Psoas muscle (tissue), 8 donors: ENCODE measurements at regions of chr17 and their contacts with region 1.

Region 1: GRCh38 chr17:66567234-66568170 is 265.1 kb downstream of the PRKCA start:
- DNase-seq: peak; percentile 72 to 84
- ATAC-seq: peak in 3 of 4 donors; percentile 64 to 85 (median 83)
- H3K4me3 ChIP-seq: no peak overlapping the region
- H3K27ac ChIP-seq: no peak overlapping the region
- H3K4me1 ChIP-seq: no peaks in the 10 kb centered on the region
- H3K27me3 ChIP-seq: no peaks in the 10 kb centered on the region
- CTCF ChIP-seq: peak; percentile 73

Region 2: GRCh38 chr17:66281671-66282369 is 285.7 kb before region 1 on chr17:
- intact Hi-C with region 1: loop called in 1 of 2 experiments (anchors 10 kb)
- DNase-seq: no peak
- ATAC-seq: no peak
- H3K4me3 ChIP-seq: no peak overlapping the region
- H3K27ac ChIP-seq: no peak overlapping the region
- H3K4me1 ChIP-seq: no peaks in the 10 kb centered on the region
- H3K27me3 ChIP-seq: peaks cover 0 to 2% (median 0%) of the 10 kb centered on the region in 3 donors
- CTCF ChIP-seq: no peak

Region 3: DNA sequence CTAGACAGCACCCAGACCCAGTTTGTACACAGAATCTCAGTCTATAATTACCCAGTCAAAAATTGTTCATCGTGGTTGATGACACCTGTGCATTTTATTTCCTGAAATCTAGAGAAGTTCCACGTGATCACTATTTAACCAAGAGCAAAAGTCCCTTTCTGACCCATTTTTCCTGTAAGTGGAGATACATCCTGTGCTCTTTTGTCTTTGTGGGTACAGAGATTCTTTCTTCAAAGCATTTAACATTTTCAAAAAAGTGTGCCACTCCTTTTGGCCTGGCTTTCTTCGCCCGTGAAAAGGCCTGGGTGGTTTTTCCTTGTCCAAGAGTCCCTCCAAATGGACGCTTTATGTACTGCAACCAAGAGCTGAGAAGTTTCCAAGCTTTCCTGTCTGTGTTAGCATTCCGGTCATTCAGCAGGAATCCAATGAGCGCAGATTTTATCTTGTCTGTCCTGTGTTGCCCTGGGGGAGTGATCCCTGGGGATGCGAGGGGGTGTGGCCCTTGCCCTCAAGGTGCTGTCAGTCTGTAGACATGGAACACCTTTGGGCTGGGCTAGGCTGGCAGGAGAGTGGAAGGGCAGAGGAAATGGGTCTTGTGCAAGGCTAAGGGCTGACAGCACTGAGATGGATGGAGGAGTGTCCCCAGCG is 106.3 kb after region 1 on chr17:
- intact Hi-C with region 1: loop called in 1 of 2 experiments (anchors 5 kb)
- DNase-seq: no peak
- ATAC-seq: peak; percentile 40 to 65 (median 58)
- H3K4me3 ChIP-seq: no peak overlapping the region
- H3K27ac ChIP-seq: no peak overlapping the region
- H3K4me1 ChIP-seq: peaks cover 8% of the 10 kb centered on the region
- H3K27me3 ChIP-seq: no peaks in the 10 kb centered on the region
- CTCF ChIP-seq: peak; percentile 69